HepG2 (cell line): ENCODE measurements at regions of chr1 and their contacts with region 1.

Region 1: DNA sequence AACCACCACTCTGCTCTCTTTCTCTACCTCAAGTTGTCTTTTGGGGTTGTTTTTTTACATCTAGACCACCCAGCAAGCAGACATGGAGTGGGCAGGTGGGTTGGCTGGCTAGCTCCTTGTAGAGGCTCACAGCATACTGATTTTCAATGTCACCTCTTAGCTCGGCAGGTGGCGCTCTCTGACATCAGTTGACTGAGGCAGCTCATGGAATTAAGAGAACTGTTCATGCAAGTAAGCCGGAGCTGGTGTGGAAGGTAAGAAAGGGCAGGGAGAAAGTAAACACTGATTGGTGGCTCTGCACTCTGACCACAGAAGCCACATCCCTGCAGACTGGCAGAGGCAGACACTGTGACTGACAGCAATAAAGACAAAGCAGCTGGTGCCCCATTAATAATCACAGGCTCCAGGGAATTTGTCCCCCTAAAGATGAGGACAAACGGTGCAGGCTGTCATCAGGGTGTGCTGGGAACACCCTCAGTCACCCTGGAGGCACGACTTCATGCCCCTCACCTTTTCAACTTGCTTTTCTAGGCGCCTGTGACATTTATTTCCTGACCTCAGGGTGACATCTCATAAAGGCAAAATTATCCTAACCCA is 226.8 kb downstream of the LMX1A start:
- DNase-seq: peak; percentile 83
- ATAC-seq: peak; percentile 100
- H3K4me3 ChIP-seq: no peak overlapping the region
- H3K27ac ChIP-seq: no peak overlapping the region
- H3K4me1 ChIP-seq: peaks cover 11% of the 10 kb centered on the region
- H3K27me3 ChIP-seq: no peaks in the 10 kb centered on the region
- CTCF ChIP-seq: peak; percentile 95
- EP300 ChIP-seq: no peak
- POLR2A ChIP-seq: no peak
- RAD21 ChIP-seq: no peak

Region 2: GRCh38 chr1:165144757-165145397 is 15.2 kb after region 1 on chr1:
- CTCF ChIA-PET with region 1: interaction called, 10 read pairs
- POLR2A ChIA-PET with region 1: interaction called, 4 read pairs
- in situ Hi-C with region 1: no loop called
- intact Hi-C with region 1: loop called (anchors 1 kb)
- DNase-seq: peak; percentile 44
- ATAC-seq: peak; percentile 95
- H3K4me3 ChIP-seq: no peak overlapping the region
- H3K27ac ChIP-seq: no peak overlapping the region
- H3K4me1 ChIP-seq: peaks cover 9% of the 10 kb centered on the region
- H3K27me3 ChIP-seq: no peaks in the 10 kb centered on the region
- CTCF ChIP-seq: peak; percentile 85
- EP300 ChIP-seq: no peak
- POLR2A ChIP-seq: no peak
- RAD21 ChIP-seq: 0 out of 2 replicates have a peak, but pooled peaks have one; percentile 21

Region 3: GRCh38 chr1:165222580-165222979 is 92.9 kb after region 1 on chr1:
- CTCF ChIA-PET with region 1: no interaction called
- POLR2A ChIA-PET with region 1: no interaction called
- in situ Hi-C with region 1: no loop called
- intact Hi-C with region 1: loop called (anchors 5 kb)
- DNase-seq: no peak
- ATAC-seq: no peak
- H3K4me3 ChIP-seq: no peak overlapping the region
- H3K27ac ChIP-seq: no peak overlapping the region
- H3K4me1 ChIP-seq: peaks cover 47% of the 10 kb centered on the region
- H3K27me3 ChIP-seq: peaks cover 0 to 1% of the 10 kb centered on the region in 2 experiments; a peak in 1 of 5 replicates
- CTCF ChIP-seq: no peak
- EP300 ChIP-seq: no peak
- POLR2A ChIP-seq: no peak
- RAD21 ChIP-seq: no peak